Activated CD4-positive, alpha-beta memory T cell treated with anti-CD3 and anti-CD28 coated beads, Interleukin-2, amount 10 ng/mL, durations not matched to agents 7 days and 5 days (primary cell): ENCODE measurements at regions of chr11 and their contacts with region 1.

Region 1: DNA sequence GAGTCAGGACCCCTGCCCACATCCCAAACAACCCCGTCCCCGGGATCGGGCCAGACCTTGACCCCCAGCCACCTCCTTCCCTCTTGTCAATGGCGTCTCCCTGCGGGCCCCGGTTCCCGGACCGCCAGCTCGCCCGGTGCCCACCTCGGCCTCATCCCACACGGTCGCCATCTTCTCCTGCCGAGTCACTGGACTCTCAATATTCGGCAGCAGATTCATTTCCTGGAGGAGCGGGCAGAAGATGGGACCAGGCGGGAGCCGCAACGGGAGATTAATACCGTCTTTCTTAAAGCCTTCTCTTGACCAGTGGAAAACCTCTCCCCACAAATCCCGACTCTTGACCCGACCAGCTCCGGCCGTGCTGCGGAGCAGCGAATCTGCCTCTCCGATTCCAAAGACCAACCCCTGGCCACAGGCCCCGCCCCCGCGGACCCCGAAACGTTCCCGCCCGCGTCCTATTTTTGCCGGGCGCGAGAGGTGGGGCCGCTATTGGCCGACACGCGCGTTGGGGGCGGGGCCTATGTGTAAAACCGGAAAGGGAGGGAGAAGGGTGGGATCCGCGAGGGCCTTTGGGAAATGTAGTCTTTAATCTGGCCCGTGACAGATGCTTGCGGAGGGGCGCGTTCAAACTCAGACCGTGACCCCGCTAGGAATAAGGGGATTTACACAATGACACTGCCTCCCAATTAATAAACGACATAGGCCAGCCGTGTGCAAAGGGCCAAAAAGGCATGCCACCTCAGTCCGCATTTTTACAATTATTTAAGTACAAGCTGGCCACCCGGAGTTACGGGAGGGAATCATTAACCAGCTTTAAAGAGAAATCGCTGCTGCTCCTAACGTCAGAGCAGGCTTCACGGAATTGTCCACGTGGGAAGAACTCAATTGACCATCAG is at the start of gene PSMC3:
- DNase-seq: peak; percentile 99
- H3K4me3 Mint-ChIP-seq: peak within 1 kb of the TSS; percentile 97
- H3K27ac Mint-ChIP-seq: peak within 1 kb of the TSS; percentile 98
- H3K4me1 Mint-ChIP-seq: peaks cover 29% of the 10 kb centered on the region
- H3K27me3 Mint-ChIP-seq: no peaks in the 10 kb centered on the region
- total RNA-seq, gene PSMC3: 111 to 112 TPM

Region 2: GRCh38 chr11:47394322-47395222 is 31.7 kb before region 1 on chr11:
- CTCF ChIA-PET with region 1: interaction called, 4 read pairs
- POLR2A ChIA-PET with region 1: interaction called, 11 read pairs
- DNase-seq: peak; percentile 72
- H3K4me3 Mint-ChIP-seq: peak overlapping the region; percentile 37
- H3K27ac Mint-ChIP-seq: peak overlapping the region; percentile 87
- H3K4me1 Mint-ChIP-seq: peaks cover 45% of the 10 kb centered on the region
- H3K27me3 Mint-ChIP-seq: no peaks in the 10 kb centered on the region

Region 3: GRCh38 chr11:47407746-47408590 is 18.3 kb before region 1 on chr11 and contains the start of gene SLC39A13:
- CTCF ChIA-PET with region 1: interaction called, 59 read pairs
- POLR2A ChIA-PET with region 1: interaction called, 48 read pairs
- DNase-seq: peak; percentile 94
- H3K4me3 Mint-ChIP-seq: peak within 1 kb of the TSS; percentile 90
- H3K27ac Mint-ChIP-seq: peak within 1 kb of the TSS; percentile 85
- H3K4me1 Mint-ChIP-seq: peaks cover 21% of the 10 kb centered on the region
- H3K27me3 Mint-ChIP-seq: no peaks in the 10 kb centered on the region
- total RNA-seq, gene SLC39A13: 23.6 to 24.2 TPM

Region 4: GRCh38 chr11:47415949-47416472 is 10.3 kb before region 1 on chr11:
- CTCF ChIA-PET with region 1: interaction called, 59 read pairs
- POLR2A ChIA-PET with region 1: interaction called, 48 read pairs
- DNase-seq: no peak
- H3K4me3 Mint-ChIP-seq: no peak overlapping the region
- H3K27ac Mint-ChIP-seq: no peak overlapping the region
- H3K4me1 Mint-ChIP-seq: peaks cover 2% of the 10 kb centered on the region
- H3K27me3 Mint-ChIP-seq: no peaks in the 10 kb centered on the region